PC-9 (cell line): ENCODE measurements at regions of chr5 and their contacts with region 1.

Region 1: GRCh38 chr5:93607367-93608258 is 24.6 kb downstream of the NR2F1 start:
- DNase-seq: peak; percentile 38 to 88
- H3K4me3 ChIP-seq: peak overlapping the region; percentile 47
- H3K27ac ChIP-seq: peak overlapping the region; percentile 60
- H3K4me1 ChIP-seq: peaks cover 21% of the 10 kb centered on the region
- H3K27me3 ChIP-seq: no peaks in the 10 kb centered on the region
- CTCF ChIP-seq: peak; percentile 58; the same call in 1 of the 2 replicates

Region 2: DNA sequence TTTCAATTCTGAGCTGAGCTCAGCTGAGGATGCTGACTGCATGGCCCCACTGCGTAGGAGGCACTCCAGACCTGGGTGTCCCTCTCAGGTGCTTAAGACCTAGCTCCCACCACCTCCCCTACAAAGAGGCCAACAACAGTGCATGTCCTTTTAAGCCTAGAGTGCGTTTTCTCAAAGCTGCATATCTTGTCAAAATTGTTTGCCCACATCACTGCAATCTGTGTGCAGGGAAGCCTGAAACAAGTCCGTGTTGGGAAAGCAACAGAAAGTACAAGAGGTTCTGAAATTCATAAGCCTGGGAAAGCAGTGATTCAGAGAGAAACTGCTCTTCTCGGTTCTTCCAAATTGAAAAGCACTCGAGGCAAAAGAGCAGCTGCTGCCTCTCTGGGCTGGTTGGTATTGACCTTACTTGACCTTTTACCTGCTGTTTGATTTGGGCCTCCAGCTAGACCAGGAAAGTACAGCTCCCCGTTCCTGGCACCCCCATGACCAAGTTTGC is 265.0 kb before region 1 on chr5:
- CTCF ChIA-PET with region 1: no interaction called
- POLR2A ChIA-PET with region 1: no interaction called
- intact Hi-C with region 1: no loop called
- DNase-seq: no peak
- H3K4me3 ChIP-seq: no peak overlapping the region
- H3K27ac ChIP-seq: no peak overlapping the region
- H3K4me1 ChIP-seq: no peaks in the 10 kb centered on the region; the same call in 1 of the 2 replicates
- H3K27me3 ChIP-seq: no peaks in the 10 kb centered on the region
- CTCF ChIP-seq: no peak

Region 3: DNA sequence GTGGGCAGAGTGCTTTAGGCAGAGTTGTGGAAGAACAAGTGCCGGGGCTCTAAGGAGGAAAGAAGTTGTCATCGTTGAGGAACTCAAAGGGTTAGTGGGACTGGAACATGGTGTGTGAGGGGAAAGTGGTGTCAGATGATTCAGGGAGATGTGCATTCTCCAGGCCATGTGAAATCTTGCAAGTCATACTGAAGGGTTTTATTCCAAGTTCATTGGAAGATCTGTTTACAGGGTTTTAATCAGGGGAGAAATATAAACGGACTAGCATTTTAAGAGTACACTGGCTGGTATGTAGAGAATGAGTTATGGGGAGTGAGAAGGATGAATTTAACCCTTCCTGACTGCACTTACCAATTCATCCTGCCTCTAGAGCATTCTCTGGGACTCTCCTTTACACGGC is 24.7 kb after region 1 on chr5:
- CTCF ChIA-PET with region 1: no interaction called
- POLR2A ChIA-PET with region 1: no interaction called
- intact Hi-C with region 1: no loop called
- DNase-seq: no peak
- H3K4me3 ChIP-seq: no peak overlapping the region
- H3K27ac ChIP-seq: no peak overlapping the region
- H3K4me1 ChIP-seq: no peaks in the 10 kb centered on the region
- H3K27me3 ChIP-seq: no peaks in the 10 kb centered on the region
- CTCF ChIP-seq: no peak

Region 4: DNA sequence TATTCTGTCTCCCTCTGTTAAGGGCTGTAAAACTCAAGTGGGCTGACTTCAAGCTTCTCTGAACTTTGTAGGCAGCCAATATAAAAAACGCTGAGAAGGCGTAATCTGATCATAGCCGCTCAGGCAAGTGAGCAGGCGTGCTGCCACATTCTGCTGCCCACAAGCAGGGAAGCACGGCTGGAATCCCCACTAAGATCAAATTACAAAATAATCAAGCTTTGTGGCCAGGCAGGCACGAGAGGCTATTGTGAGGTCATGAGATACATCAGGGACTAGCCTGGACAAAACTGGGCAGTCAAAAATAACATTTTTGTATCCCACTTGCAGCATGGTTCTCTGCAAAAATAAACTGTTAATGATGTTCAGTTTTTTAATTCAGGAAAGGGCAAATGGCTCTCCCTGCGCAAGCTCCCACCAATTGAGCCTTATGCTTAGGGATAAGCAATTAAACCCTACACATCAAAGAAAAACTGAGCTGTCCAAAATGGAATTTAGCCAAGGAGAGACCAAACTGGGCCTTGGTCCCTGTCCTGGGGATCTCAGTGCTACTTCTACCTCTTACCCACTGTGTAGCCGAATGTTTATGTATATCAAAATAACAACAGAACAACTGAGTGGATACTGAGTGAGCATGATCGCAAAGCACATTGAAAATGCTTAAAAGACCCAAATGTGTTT is 69.9 kb after region 1 on chr5:
- CTCF ChIA-PET with region 1: no interaction called
- POLR2A ChIA-PET with region 1: no interaction called
- intact Hi-C with region 1: loop called (anchors 10 kb)
- DNase-seq: peak; percentile 72 to 82
- H3K4me3 ChIP-seq: no peak overlapping the region
- H3K27ac ChIP-seq: no peak overlapping the region
- H3K4me1 ChIP-seq: 0 out of 2 replicates have a peak, but pooled peaks cover 5% of the 10 kb centered on the region
- H3K27me3 ChIP-seq: no peaks in the 10 kb centered on the region
- CTCF ChIP-seq: no peak